CD4-positive, alpha-beta memory T cell (primary cell): ENCODE measurements at regions of chr4 and their contacts with region 1.

Region 1: GRCh38 chr4:153115322-153116290 is 88.6 kb upstream of the TRIM2 start:
- DNase-seq: peak; percentile 85 to 92 (median 89)
- H3K4me3 ChIP-seq: peak overlapping the region in 1 of 2 donors; percentile 37
- H3K4me3 Mint-ChIP-seq: peak overlapping the region in 1 of 8 donors; percentile 74
- H3K27ac ChIP-seq: peak overlapping the region; percentile 68
- H3K27ac Mint-ChIP-seq: no peak overlapping the region
- H3K4me1 ChIP-seq: peaks cover 62% of the 10 kb centered on the region
- H3K4me1 Mint-ChIP-seq: peaks cover 0 to 18% (median 9%) of the 10 kb centered on the region in 4 donors
- H3K27me3 ChIP-seq: no peaks in the 10 kb centered on the region
- H3K27me3 Mint-ChIP-seq: no peaks in the 10 kb centered on the region

Region 2: DNA sequence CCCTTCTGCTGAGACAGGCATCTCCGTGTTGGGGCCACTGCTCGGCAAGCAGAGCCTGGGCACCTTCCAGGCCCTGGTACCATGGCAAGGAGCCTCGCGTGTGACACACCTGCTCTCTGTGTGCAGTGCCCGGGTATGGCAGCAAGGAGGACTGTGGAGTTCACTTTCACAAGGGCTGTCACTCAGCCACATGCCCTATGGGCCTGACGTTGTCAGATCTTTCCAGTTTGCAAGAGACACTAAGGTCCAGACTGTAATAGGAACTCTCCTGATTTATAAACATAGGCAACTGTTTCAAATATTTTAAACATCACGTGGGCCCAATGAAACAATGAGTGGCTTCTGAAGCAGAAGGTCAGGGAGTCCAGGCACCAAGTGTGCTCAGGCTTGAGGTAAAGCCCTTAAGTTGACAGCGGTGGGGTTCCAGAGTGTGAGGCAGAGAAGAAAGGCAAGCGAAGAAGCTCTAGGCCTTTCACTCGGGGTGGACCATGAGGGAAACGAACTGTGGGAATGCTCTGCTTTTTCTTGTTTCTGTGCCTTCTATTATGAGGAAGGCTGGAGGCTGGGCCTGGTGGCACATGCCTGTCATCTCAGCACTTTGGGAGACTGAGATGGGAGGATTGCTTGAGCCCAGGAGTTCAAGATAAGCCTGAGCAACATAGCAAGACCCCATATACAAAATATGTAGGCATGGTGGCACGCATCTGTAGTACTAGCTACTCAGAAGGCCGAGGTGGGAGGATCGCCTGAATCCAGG is 20.0 kb before region 1 on chr4:
- CTCF ChIA-PET with region 1: interaction called, 15 read pairs
- POLR2A ChIA-PET with region 1: interaction called, 5 read pairs
- intact Hi-C with region 1: no loop called
- DNase-seq: no peak
- H3K4me3 ChIP-seq: no peak overlapping the region
- H3K4me3 Mint-ChIP-seq: no peak overlapping the region
- H3K27ac ChIP-seq: no peak overlapping the region
- H3K27ac Mint-ChIP-seq: peak overlapping the region in 3 of 7 donors; percentile 19 to 77 (median 50)
- H3K4me1 ChIP-seq: peaks cover 4% of the 10 kb centered on the region
- H3K4me1 Mint-ChIP-seq: peaks cover 2 to 9% (median 6%) of the 10 kb centered on the region in 4 donors
- H3K27me3 ChIP-seq: no peaks in the 10 kb centered on the region
- H3K27me3 Mint-ChIP-seq: no peaks in the 10 kb centered on the region